K562 (cell line): ENCODE measurements at regions of chr5 and their contacts with region 1.

Region 1: DNA sequence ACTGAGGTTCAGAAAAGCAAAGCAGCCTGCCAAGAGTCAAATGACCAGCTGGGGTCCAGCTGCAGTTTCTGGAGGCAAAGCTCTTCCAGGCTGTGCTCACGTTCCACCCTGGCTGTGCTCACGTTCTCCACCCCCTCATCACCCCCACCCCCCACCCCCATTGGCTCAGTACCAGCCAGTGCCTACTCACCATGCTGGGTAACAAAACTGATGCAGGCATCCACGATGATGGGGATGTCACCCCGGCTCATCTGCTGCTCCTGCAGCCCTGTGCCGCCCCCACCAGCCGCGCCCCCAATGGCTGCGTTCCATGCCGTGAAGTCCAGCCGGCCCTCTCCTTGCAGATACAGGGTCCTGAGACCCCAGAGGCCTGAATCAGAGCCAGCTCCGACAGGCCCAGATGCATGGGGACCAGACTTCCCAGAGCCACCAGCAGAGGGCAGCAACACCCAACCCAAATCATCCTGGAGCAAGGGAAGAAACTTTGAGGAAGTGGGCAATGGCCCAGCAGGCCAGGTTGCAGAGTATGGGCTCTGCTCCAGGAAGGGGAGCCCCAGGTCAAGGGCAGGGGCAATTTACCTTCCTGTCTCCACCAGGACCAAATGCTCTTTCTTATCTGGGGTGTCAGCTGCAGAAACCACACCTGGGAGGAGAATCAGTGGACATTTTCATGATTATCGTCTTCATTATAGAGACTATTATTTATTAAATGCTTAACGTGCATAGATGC is 13.7 kb upstream of the FCHSD1 start:
- DNase-seq: peak; percentile 76 to 86 (median 78)
- ATAC-seq: peak; percentile 97
- H3K4me3 ChIP-seq: no peak overlapping the region
- H3K27ac ChIP-seq: no peak overlapping the region
- H3K4me1 ChIP-seq: peaks cover 5 to 6% of the 10 kb centered on the region in 2 experiments; a peak in 4 of 5 replicates
- H3K27me3 ChIP-seq: no peaks in the 10 kb centered on the region
- CTCF ChIP-seq: peak; percentile 90 to 93 (median 91)
- EP300 ChIP-seq: 0 out of 2 replicates have a peak, but pooled peaks have one; percentile 13
- POLR2A ChIP-seq: no peak
- RAD21 ChIP-seq: peak; percentile 88 to 89

Region 2: DNA sequence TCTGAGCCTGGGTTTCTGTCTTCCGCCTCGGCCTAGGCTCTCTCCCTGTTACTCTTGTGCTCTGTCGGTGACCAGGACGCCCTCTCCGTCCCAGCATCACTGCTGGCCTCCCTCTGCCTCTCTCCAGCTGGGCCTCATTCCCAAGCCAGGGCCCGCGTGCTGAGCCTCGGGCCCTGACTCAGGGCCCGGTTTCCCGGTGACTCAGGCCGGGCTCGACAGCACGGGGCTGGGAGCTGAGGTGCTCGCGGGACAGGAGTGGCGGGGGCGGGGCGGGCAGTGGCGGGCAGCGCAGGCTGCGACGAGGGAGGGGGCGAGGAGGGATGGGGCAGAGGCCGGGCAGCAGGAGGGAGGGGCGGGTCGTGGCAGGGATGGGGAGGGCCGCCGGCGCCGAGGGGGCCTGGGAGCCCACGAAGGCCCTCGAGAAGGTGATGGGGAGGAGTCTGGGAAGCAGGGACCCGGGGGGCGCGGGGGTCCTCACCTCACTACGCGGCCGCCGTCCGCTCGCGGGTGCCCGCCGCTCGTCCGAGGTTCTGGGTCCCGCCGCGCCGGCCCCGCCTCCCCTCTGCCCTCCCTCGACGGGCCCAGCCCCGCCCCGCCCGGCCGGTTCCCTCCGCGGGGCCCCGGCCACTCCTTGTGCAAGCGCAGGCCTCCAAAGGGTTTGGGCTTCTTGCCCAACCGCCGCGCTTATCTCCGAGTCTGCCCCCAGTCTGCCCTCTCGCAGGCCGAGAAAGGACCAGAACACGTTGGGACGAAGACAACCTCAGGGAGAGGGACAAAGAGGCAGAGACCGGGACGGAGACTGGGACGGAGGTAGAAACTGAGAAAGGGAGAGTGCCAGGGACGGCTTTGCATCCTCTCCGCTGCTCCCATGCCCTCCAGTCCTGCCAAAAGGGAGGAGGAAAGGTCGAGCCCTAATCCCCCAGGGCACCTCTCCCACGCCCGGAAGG is 17.1 kb after region 1 on chr5 and contains the start of gene ARAP3:
- CTCF ChIA-PET with region 1: interaction called, 5 read pairs
- POLR2A ChIA-PET with region 1: interaction called, 11 read pairs
- in situ Hi-C with region 1: no loop called
- intact Hi-C with region 1: no loop called
- DNase-seq: peak; percentile 83 to 88 (median 88)
- ATAC-seq: peak; percentile 92
- H3K4me3 ChIP-seq: peak within 1 kb of the TSS; percentile 36
- H3K27ac ChIP-seq: peak within 1 kb of the TSS; percentile 81
- H3K4me1 ChIP-seq: peaks cover 33 to 40% of the 10 kb centered on the region in 2 experiments
- H3K27me3 ChIP-seq: no peaks in the 10 kb centered on the region
- CTCF ChIP-seq: no peak
- EP300 ChIP-seq: peak; percentile 57
- POLR2A ChIP-seq: 0 out of 2 replicates have a peak, but pooled peaks have one; percentile 28
- RAD21 ChIP-seq: peak in 1 of 2 experiments; percentile 11; a peak in 1 of 4 replicates
- polyA plus RNA-seq, gene ARAP3: 0.83 to 1.4 TPM

Region 3: GRCh38 chr5:141691867-141692532 is 27.1 kb after region 1 on chr5:
- CTCF ChIA-PET with region 1: no interaction called
- POLR2A ChIA-PET with region 1: interaction called, 3 read pairs
- in situ Hi-C with region 1: no loop called
- intact Hi-C with region 1: loop called (anchors 1 kb)
- DNase-seq: peak; percentile 84 to 90 (median 88)
- ATAC-seq: peak; percentile 89
- H3K4me3 ChIP-seq: peak overlapping the region; percentile 17
- H3K27ac ChIP-seq: peak overlapping the region; percentile 81
- H3K4me1 ChIP-seq: peaks cover 38 to 55% of the 10 kb centered on the region in 2 experiments
- H3K27me3 ChIP-seq: peaks cover 0 to 12% of the 10 kb centered on the region in 2 experiments; a peak in 3 of 5 replicates
- CTCF ChIP-seq: peak; percentile 97 to 99 (median 98)
- EP300 ChIP-seq: no peak
- POLR2A ChIP-seq: no peak
- RAD21 ChIP-seq: peak; percentile 94 to 95

Region 4: GRCh38 chr5:141811287-141812155 is 146.6 kb after region 1 on chr5:
- CTCF ChIA-PET with region 1: interaction called, 3 read pairs
- POLR2A ChIA-PET with region 1: interaction called, 3 read pairs
- in situ Hi-C with region 1: no loop called
- intact Hi-C with region 1: loop called (anchors 1 kb)
- DNase-seq: peak; percentile 51 to 82 (median 76)
- ATAC-seq: peak; percentile 80
- H3K4me3 ChIP-seq: no peak overlapping the region
- H3K27ac ChIP-seq: no peak overlapping the region
- H3K4me1 ChIP-seq: peaks cover under 1 to 6% of the 10 kb centered on the region in 2 experiments; a peak in 4 of 5 replicates
- H3K27me3 ChIP-seq: peaks cover 11 to 29% of the 10 kb centered on the region in 2 experiments
- CTCF ChIP-seq: peak; percentile 68 to 82 (median 73)
- EP300 ChIP-seq: no peak
- POLR2A ChIP-seq: no peak
- RAD21 ChIP-seq: peak in 1 of 2 experiments; percentile 38; a peak in 2 of 4 replicates

Region 5: GRCh38 chr5:141960449-141961202 is 295.7 kb after region 1 on chr5:
- CTCF ChIA-PET with region 1: interaction called, 12 read pairs
- POLR2A ChIA-PET with region 1: interaction called, 3 read pairs
- in situ Hi-C with region 1: no loop called
- intact Hi-C with region 1: loop called (anchors 10 kb)
- DNase-seq: peak; percentile 83 to 95 (median 86)
- ATAC-seq: peak; percentile 94
- H3K4me3 ChIP-seq: no peak overlapping the region
- H3K27ac ChIP-seq: peak overlapping the region; percentile 55
- H3K4me1 ChIP-seq: peaks cover 3 to 16% of the 10 kb centered on the region in 2 experiments
- H3K27me3 ChIP-seq: peaks cover 3 to 21% of the 10 kb centered on the region in 2 experiments; a peak in 3 of 5 replicates
- CTCF ChIP-seq: peak; percentile 90 to 95 (median 94)
- EP300 ChIP-seq: no peak
- POLR2A ChIP-seq: no peak
- RAD21 ChIP-seq: peak; percentile 86 to 91

Region 6: GRCh38 chr5:141968914-141969608 is 304.2 kb after region 1 on chr5 and contains the start of gene RNF14:
- CTCF ChIA-PET with region 1: no interaction called
- POLR2A ChIA-PET with region 1: interaction called, 3 read pairs
- in situ Hi-C with region 1: no loop called
- intact Hi-C with region 1: loop called (anchors 10 kb)
- DNase-seq: peak; percentile 93 to 97 (median 94)
- ATAC-seq: peak; percentile 97
- H3K4me3 ChIP-seq: peak within 1 kb of the TSS; percentile 72
- H3K27ac ChIP-seq: peak within 1 kb of the TSS; percentile 94
- H3K4me1 ChIP-seq: peaks cover 9 to 14% of the 10 kb centered on the region in 2 experiments; a peak in 3 of 5 replicates
- H3K27me3 ChIP-seq: no peaks in the 10 kb centered on the region
- CTCF ChIP-seq: peak; percentile 85 to 97 (median 86)
- EP300 ChIP-seq: no peak
- POLR2A ChIP-seq: peak; percentile 98
- RAD21 ChIP-seq: peak in 1 of 2 experiments; percentile 25; a peak in 1 of 4 replicates
- polyA plus RNA-seq, gene RNF14: 100 to 140 TPM